AG04449 (cell line): ENCODE measurements at regions of chr1 and their contacts with region 1.

Region 1: GRCh38 chr1:39816415-39817090 is 27.9 kb upstream of the BMP8B start:
- DNase-seq: peak; percentile 49
- H3K4me3 ChIP-seq: no peak overlapping the region
- CTCF ChIP-seq: peak; percentile 81

Region 2: GRCh38 chr1:39799770-39800470 is 16.6 kb before region 1 on chr1:
- CTCF ChIA-PET with region 1: interaction called, 41 read pairs
- POLR2A ChIA-PET with region 1: no interaction called
- DNase-seq: peak; percentile 75
- H3K4me3 ChIP-seq: 0 out of 2 replicates have a peak overlapping the region, but pooled peaks have one; percentile 12
- CTCF ChIP-seq: peak; percentile 85

Region 3: GRCh38 chr1:39839676-39840075 is 23.1 kb after region 1 on chr1:
- CTCF ChIA-PET with region 1: interaction called, 16 read pairs
- POLR2A ChIA-PET with region 1: no interaction called
- DNase-seq: no peak
- H3K4me3 ChIP-seq: no peak overlapping the region
- CTCF ChIP-seq: no peak

Region 4: DNA sequence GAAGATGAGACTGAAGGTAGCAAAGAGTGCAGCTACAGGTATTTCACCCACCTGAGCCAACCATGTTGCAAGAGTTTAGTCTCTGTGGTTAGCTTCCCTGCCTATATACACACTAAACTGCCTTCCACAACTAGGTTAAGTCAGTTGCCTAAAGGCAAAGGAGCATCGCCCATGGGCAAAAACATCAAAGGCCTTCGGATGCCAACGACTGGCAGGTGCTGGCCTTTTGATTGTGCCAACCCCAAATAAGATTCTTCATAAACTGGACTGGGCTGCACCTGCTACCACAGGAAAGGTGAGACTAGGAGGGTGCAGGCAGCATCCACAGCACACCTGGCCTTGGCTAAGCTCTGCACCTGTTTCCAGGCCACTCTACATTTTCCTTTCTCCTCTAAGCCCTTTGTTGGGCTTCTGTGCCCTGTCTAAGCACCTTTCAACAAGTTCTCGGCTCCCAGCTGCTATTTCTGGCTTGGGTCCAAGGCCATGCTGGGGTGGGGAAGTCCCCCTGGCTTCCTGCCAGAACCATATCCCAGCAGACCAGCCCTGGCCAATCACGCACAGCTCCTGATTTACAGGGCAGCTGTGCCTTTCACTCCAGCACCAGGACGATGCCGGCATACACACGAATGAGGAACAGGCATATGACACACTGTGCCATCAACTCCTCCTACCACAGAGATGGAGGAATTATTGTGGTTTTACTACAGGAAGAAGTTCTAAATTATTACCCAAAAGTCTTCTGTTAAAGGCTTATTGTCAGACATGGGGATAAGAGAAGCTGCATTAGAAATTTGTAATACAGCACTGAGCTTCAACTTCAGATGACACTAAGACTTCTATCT is 28.9 kb after region 1 on chr1:
- CTCF ChIA-PET with region 1: interaction called, 16 read pairs
- POLR2A ChIA-PET with region 1: no interaction called
- DNase-seq: peak; percentile 38
- H3K4me3 ChIP-seq: no peak overlapping the region
- CTCF ChIP-seq: no peak

Region 5: DNA sequence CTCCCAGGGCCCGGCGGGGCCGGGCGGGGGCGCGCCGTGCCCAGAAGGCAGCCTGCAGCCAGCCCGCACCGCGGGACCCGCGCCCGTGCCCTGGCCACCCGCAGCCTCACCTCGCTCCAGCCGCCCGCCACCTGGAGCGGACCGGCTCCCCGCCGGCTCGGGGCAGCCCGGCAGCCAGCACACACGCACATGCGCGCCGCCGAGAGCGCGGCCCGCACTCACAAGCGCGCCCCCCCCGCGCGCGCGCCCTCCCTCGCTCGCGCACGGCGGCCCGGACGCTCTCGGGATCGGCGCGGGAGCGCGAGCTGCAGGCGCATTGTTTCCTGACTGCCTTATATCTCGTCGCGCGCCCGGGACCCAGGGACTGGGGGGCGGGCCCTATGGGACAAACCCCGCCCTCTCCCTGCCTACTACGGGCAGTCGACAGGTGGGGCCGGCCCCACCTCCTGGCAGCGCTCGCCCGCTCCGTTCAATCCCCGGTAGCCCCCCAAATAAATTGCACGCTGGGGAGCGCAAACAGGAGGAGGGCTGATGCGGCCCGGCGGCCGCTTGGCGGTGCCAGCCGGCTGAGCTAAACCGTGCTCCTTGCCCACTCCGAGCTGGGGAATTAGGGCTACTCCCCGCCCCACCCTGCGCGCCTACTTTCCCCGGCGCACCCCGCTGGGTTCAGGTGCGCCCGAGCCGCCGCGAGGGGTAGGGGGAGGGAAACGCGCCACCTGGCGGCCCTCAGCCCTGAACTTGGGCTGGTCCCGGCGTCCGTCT is 85.3 kb after region 1 on chr1 and contains the start of gene MYCL:
- CTCF ChIA-PET with region 1: interaction called, 191 read pairs
- POLR2A ChIA-PET with region 1: no interaction called
- DNase-seq: no peak
- H3K4me3 ChIP-seq: peak within 1 kb of the TSS; percentile 63
- CTCF ChIP-seq: peak; percentile 70

Region 6: GRCh38 chr1:40078512-40079333 is 262.2 kb after region 1 on chr1:
- CTCF ChIA-PET with region 1: no interaction called
- POLR2A ChIA-PET with region 1: no interaction called
- DNase-seq: no peak
- H3K4me3 ChIP-seq: no peak overlapping the region
- CTCF ChIP-seq: peak; percentile 79